ENCODE measurements at regions of chr19 and their contacts with region 1.

Region 1: DNA sequence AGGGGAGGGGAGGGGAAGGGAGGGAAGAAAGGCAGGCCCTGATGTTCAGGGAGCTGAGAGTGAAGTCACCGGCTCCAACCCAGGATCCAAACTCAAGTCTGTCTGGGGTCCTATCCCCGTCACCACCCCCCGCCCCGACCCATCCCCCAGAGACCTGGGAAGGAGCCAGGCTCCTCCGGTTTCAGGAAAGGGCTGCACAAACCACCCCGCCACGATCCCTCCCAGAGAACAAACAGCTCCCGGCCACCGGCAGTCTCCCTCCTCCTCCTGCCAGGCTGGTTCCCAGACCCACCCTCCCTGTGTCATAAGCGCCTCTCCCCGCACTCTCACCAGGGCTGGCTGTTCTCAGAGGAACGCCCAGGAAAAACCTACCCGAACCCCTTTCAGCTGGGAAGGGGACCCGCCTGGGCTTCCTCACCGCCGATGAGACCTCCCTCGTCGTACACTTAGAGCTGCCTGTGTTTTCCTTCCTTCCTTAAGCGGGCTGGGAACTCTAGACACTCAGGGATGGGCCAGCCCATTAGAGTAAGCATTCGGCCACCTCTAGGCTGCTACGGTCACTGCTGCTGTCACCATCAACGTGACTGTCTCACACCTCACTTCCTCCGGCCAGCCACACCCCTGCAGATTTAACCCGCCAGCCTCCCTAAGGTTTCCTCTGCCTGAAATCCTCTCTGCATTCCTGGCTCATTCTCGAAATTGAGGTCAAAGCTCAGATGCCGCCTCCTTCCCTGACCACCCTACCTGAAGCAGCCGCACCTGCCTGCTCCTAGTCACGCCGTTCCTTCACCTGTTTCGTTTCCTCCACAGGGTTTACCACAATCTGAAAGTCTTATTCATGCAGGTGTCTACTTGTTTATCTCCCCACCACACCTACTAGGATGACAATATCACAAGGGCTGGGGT is 6.3 kb upstream of the RDH13 start:
- DNase-seq: peak; percentile 56 to 75 (median 65)
- ATAC-seq: peak; percentile 97
- H3K4me3 ChIP-seq: peak overlapping the region; percentile 42
- H3K27ac ChIP-seq: no peak overlapping the region
- H3K4me1 ChIP-seq: peaks cover 19 to 21% of the 10 kb centered on the region in 2 experiments
- H3K27me3 ChIP-seq: peaks cover 8% of the 10 kb centered on the region in 2 experiments; a peak in 4 of 5 replicates
- CTCF ChIP-seq: peak; percentile 9 to 18 (median 10); a peak in 1 of 6 replicates
- EP300 ChIP-seq: no peak
- POLR2A ChIP-seq: peak; percentile 44; the same call in 1 of the 2 replicates
- RAD21 ChIP-seq: no peak; a peak in 1 of 4 replicates

Region 2: GRCh38 chr19:55080968-55081772 is 12.0 kb after region 1 on chr19:
- CTCF ChIA-PET with region 1: no interaction called
- POLR2A ChIA-PET with region 1: interaction called, 32 read pairs
- in situ Hi-C with region 1: no loop called
- intact Hi-C with region 1: no loop called
- DNase-seq: peak; percentile 94 to 96 (median 95)
- ATAC-seq: peak; percentile 91
- H3K4me3 ChIP-seq: peak overlapping the region; percentile 86
- H3K27ac ChIP-seq: peak overlapping the region; percentile 99
- H3K4me1 ChIP-seq: peaks cover 0 to 55% of the 10 kb centered on the region in 2 experiments; a peak in 3 of 5 replicates
- H3K27me3 ChIP-seq: no peaks in the 10 kb centered on the region
- CTCF ChIP-seq: peak; percentile 11 to 23 (median 16); a peak in 3 of 6 replicates
- EP300 ChIP-seq: no peak
- POLR2A ChIP-seq: peak; percentile 78
- RAD21 ChIP-seq: no peak; a peak in 1 of 4 replicates